HEK293 (cell line): ENCODE measurements at regions of chr11 and their contacts with region 1.

Region 1: GRCh38 chr11:111586388-111586831 is 15.8 kb upstream of the SIK2 start:
- H3K4me3 ChIP-seq: no peak overlapping the region
- H3K27ac ChIP-seq: no peak overlapping the region
- H3K4me1 ChIP-seq: no peaks in the 10 kb centered on the region
- CTCF ChIP-seq: no peak

Region 2: DNA sequence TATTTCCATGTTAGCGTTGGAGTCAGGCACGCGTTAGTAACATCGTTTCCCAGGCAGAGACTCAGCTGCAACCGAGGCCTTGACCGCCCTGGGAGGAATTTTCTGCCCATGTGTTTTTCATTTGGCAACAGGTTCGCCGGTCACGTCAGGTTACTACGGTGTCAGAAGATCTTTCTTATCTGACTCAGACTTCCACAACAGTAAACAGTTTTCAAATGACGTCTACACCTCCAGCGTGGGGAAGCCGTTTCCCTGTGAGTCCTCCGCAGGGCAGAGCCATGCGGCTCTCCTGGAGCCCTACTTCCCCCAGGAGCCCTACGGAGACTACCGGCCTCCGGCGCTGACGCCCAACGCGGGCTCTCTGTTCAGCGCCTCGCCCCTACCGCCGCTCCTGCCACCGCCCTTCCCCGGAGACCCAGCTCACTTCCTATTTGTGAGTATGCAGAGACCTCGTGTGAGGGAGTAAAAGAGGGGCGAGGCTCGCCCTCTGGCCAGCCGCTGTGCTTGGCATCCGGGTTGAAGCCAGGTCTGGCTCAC is 302.4 kb before region 1 on chr11:
- CTCF ChIA-PET with region 1: no interaction called
- POLR2A ChIA-PET with region 1: no interaction called
- H3K4me3 ChIP-seq: no peak overlapping the region
- H3K27ac ChIP-seq: no peak overlapping the region
- H3K4me1 ChIP-seq: no peaks in the 10 kb centered on the region
- CTCF ChIP-seq: no peak

Region 3: GRCh38 chr11:111557425-111558111 is 28.8 kb before region 1 on chr11:
- CTCF ChIA-PET with region 1: no interaction called
- POLR2A ChIA-PET with region 1: no interaction called
- H3K4me3 ChIP-seq: no peak overlapping the region
- H3K27ac ChIP-seq: no peak overlapping the region
- H3K4me1 ChIP-seq: no peaks in the 10 kb centered on the region
- CTCF ChIP-seq: no peak

Region 4: DNA sequence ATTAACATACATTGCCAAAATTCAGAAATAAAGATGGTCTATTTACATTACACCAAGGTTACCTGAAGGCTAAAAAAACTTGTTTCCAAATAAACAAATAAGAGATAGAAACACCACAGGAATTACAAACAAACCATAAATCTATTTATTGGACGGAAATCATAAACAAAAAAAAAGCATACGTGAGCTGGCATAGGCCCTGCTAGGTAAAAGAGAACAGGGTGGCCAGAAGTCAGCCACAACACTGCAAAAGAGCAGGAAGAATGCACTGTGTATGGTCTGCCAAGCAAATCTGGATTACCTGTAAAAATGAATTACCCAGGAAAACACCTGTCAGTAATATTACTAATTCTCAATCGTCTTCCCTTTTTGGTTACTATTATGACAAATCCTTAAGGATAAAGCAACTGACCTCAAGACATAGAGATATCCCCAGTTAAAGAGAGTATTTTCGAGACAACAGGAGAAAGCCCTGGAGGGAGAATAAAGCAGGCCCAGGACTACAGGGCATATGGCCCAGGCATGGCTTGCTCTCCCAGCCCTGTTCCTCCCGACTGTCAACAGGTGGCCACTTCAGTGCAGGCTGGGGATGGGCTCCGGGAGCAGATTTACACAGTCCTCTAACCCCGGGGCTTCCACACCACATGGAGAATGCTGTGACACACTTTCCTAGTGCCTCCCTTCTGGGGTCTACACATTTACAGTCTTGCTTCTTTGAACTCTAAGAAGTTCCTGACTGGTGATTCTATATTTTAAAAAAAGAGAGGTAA is 161.8 kb after region 1 on chr11:
- CTCF ChIA-PET with region 1: interaction called, 11 read pairs
- POLR2A ChIA-PET with region 1: no interaction called
- H3K4me3 ChIP-seq: no peak overlapping the region
- H3K27ac ChIP-seq: no peak overlapping the region
- H3K4me1 ChIP-seq: no peaks in the 10 kb centered on the region
- CTCF ChIP-seq: no peak